ENCODE measurements at regions of chr1 and their contacts with region 1.

Region 1: DNA sequence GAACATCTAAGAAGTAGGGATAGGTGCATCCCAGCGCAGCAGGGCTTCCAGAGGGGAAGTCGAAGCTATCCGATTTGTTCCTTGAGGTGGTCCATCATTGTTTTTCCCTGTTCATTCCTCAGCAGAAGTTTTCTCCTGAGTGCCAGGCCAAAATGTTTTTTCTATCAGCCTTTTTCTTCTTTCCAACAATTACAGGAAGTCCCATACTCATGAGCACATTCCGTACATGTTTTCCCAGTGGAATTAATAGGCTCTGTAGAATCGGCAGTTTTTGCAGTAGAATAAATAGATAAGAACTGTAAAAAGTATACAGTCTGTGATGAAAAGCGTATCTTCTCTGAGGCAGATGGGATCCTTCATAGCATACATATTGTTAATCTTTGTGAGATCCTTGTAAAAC is 24.8 kb downstream of the CD101 start:
- DNase-seq: no peak
- H3K4me3 ChIP-seq: no peak overlapping the region
- H3K27ac ChIP-seq: no peak overlapping the region
- H3K4me1 ChIP-seq: no peaks in the 10 kb centered on the region
- H3K27me3 ChIP-seq: no peaks in the 10 kb centered on the region
- CTCF ChIP-seq: no peak

Region 2: GRCh38 chr1:116968261-116968660 is 58.1 kb before region 1 on chr1:
- CTCF ChIA-PET with region 1: no interaction called
- dilution Hi-C with region 1: no loop called
- in situ Hi-C with region 1: no loop called
- intact Hi-C with region 1: loop called (anchors 2 kb)
- DNase-seq: no peak
- H3K4me3 ChIP-seq: no peak overlapping the region
- H3K27ac ChIP-seq: no peak overlapping the region
- H3K4me1 ChIP-seq: peaks cover 15% of the 10 kb centered on the region
- H3K27me3 ChIP-seq: no peaks in the 10 kb centered on the region
- CTCF ChIP-seq: no peak

Region 3: GRCh38 chr1:117093870-117094621 is 67.7 kb after region 1 on chr1:
- CTCF ChIA-PET with region 1: no interaction called
- dilution Hi-C with region 1: loop called (anchors 5 kb)
- in situ Hi-C with region 1: no loop called
- intact Hi-C with region 1: no loop called
- DNase-seq: peak; percentile 66
- H3K4me3 ChIP-seq: no peak overlapping the region
- H3K27ac ChIP-seq: peak overlapping the region; percentile 86
- H3K4me1 ChIP-seq: peaks cover 14% of the 10 kb centered on the region
- H3K27me3 ChIP-seq: no peaks in the 10 kb centered on the region
- CTCF ChIP-seq: peak; percentile 56 to 57